Testis (tissue), 5 donors: ENCODE measurements at regions of chr3 and their contacts with region 1.

Region 1: DNA sequence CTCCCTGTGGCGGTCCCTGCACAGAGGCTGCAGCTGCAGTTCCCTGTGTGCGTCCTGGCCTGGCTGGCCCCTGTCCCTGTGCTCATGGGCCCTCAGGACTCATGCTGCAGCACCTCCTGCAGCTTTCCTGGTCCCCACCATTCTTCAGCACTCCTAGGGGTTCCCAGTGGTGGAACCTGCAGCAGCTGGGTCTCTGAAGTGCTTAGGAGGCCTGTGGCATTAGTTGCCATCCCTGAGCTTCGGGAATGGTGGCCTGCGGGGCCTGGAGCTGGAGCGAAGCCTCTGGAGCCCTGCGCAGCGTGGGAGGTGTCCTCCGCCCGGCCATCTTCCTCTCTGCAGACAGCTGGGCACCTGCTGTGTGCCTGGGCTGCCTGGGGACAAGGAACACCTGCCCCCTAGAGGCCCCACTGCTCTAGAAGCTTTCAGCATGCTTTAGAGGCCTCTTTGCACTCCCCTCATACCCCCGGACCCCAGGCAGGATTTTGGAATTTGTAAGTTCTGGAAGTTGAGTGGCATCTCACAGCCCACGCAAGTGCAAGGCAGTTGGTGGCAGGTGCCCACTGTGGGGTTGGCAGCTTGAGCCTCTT is 13.1 kb downstream of the PLXNA1 start:
- DNase-seq: no peak
- H3K4me3 ChIP-seq: no peak overlapping the region
- H3K27ac ChIP-seq: no peak overlapping the region
- H3K4me1 ChIP-seq: peaks cover 25% of the 10 kb centered on the region
- H3K27me3 ChIP-seq: no peaks in the 10 kb centered on the region
- CTCF ChIP-seq: no peak
- POLR2A ChIP-seq: no peak

Region 2: GRCh38 chr3:127544192-127544802 is 548.3 kb after region 1 on chr3:
- intact Hi-C with region 1: loop called (anchors 10 kb)
- DNase-seq: peak; percentile 89
- H3K4me3 ChIP-seq: no peak overlapping the region
- H3K27ac ChIP-seq: no peak overlapping the region
- H3K4me1 ChIP-seq: peaks cover 14% of the 10 kb centered on the region
- H3K27me3 ChIP-seq: no peaks in the 10 kb centered on the region
- CTCF ChIP-seq: peak; percentile 62 to 79 (median 67)
- POLR2A ChIP-seq: no peak